Heart left ventricle (tissue), 16 donors: ENCODE measurements at regions of chr14 and their contacts with region 1.

Region 1: DNA sequence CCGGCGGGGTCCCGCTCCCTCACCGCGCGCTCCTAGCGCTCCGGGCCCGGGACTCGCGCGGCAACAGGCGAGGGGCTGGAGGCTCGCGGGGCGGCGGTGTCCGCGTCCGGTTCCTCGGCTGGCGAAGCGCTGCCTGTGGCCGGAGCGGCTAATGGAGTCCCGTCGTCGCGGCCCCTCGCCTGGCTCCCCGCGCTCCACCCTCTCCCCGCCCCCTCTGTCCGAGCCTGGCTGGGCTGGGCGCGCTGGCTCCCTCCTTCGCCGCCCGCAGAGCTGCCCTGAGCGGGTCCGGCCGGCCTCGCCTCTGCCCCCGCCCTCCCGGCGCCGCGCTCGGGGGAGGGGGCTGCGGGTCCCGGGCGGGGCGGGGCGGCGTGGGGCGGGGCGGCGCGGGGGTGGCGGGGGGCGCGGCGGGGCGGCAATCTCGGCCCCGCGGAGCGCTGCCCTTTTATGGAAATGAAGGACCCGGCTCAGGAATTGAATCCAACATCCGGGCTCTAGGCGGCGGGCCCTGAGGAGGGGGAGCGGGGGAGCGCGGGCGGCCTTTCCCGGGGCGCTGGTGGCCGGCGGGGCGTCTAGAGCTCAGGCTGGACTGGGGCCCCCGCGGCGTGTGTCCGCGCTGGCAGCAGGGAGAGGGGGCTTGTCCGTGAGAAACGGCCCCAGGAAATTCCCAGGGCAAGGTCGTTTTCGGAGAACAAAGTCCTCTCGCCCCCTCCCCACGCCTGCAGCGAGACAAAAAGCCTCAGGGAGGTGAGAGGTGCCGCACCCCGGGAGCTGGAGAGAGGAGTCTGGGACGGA is at the start of gene FERMT2:
- DNase-seq: peak; percentile 92 to 94 (median 93)
- ATAC-seq: peak; percentile 89 to 97 (median 92)
- H3K4me3 ChIP-seq: peak within 1 kb of the TSS; percentile 65 to 98 (median 94)
- H3K27ac ChIP-seq: peak within 1 kb of the TSS; percentile 96 to 100 (median 99)
- H3K4me1 ChIP-seq: peaks cover 11 to 43% (median 33%) of the 10 kb centered on the region in 12 donors
- H3K27me3 ChIP-seq: peaks cover 0 to 44% (median 0%) of the 10 kb centered on the region in 9 donors
- CTCF ChIP-seq: no peak
- POLR2A ChIP-seq: peak; percentile 5 to 79
- total RNA-seq, gene FERMT2: 87.4 to 158 (median 104) TPM

Region 2: DNA sequence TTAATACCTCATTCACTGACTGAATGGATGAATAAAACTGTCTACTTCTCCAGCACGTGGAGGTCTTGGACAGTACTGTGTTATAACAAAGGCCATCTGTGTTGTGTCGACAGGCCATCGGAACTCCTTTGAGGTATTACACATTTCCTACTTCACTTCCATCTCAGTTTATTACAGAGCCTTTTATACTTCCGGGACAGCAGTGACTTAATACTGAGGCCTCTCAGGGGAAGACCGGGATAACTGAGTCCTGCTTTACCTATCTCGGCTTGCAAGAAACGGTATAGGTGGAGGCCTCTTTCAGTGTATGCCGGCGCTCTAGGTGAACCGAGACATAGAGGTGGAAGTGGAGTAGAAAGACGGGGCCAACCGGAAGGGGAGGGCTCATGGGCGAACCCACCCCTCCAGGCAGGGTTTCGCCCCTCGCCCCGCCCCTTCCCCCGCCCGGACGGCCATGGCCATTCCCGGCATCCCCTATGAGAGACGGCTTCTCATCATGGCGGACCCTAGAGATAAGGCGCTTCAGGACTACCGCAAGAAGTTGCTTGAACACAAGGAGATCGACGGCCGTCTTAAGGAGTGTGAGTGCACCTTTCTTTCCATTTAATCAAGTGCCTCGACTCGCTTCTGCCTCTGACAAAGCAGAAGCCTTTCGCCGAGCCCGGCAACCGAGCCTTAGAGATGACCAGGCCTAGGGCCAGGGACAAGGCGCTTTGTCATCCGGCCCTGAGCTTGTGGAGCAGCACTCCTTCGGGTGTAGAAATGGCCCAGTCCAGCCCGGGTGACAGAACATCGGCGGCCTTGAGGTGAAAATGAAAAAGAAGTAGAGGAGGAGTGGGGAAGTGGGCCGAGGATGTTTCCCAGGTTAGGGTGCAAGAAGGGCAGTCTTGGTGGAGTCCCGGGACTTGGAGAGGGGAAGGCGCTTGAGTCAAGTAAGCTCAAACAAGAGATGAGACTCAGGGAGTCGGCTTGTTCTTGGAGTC is 244.1 kb before region 1 on chr14 and contains the start of gene PSMC6:
- intact Hi-C with region 1: loop called in 1 of 10 experiments (anchors 10 kb)
- DNase-seq: peak; percentile 96 to 97 (median 96)
- ATAC-seq: peak; percentile 99 to 100 (median 100)
- H3K4me3 ChIP-seq: peak within 1 kb of the TSS; percentile 61 to 91 (median 80)
- H3K27ac ChIP-seq: peak within 1 kb of the TSS; percentile 68 to 93 (median 90)
- H3K4me1 ChIP-seq: peaks cover 0 to 43% (median 20%) of the 10 kb centered on the region in 12 donors
- H3K27me3 ChIP-seq: no peaks in the 10 kb centered on the region
- CTCF ChIP-seq: no peak
- POLR2A ChIP-seq: peak in 1 of 2 donors; percentile 58
- total RNA-seq, gene PSMC6: 74.3 to 90.7 (median 81.4) TPM

Region 3: DNA sequence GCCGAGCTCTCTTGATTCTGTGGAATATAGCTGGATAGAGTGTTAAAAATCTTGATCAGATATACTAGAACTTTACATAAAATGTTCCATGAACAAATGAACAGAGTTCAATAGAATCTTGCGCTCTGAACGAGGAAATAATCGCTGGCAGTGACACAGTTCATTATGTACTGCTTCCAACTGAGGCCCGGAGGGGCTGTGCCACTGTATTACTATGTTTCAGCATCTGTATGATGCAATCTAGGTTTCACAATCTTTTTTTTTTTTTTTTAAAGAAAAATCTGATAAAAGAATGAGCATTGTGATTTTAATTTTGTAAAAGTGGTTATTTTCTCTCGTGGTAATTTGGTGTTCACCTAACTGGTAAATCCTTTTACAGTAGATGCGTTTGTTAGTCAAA is 77.4 kb before region 1 on chr14:
- intact Hi-C with region 1: loop called in 2 of 10 experiments (anchors 2 to 10 kb)
- DNase-seq: no peak
- ATAC-seq: peak in 2 of 4 donors; percentile 44 to 47
- H3K4me3 ChIP-seq: no peak overlapping the region
- H3K27ac ChIP-seq: no peak overlapping the region
- H3K4me1 ChIP-seq: peaks cover 0 to 32% (median 17%) of the 10 kb centered on the region in 12 donors
- H3K27me3 ChIP-seq: no peaks in the 10 kb centered on the region
- CTCF ChIP-seq: no peak
- POLR2A ChIP-seq: no peak

Region 4: DNA sequence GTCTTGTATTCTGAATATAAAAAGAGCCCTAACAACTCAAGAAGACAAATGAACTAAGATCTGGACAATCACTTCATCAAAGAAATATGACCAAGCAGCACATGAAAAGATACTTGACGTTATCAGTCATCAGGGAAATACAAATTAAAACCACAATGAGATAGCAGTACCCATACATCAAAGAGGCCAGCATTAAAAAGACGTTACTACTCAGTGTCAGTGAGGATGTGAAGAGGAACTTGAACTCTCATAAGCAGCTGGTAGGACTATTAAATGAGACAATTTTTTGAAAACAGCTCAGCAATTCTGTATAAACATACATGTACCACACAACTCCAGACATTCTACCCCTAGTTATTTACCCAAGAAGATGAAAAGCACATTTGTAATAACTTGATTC is 56.1 kb before region 1 on chr14:
- intact Hi-C with region 1: loop called in 1 of 10 experiments (anchors 10 kb)
- DNase-seq: no peak
- ATAC-seq: peak in 2 of 4 donors; percentile 42 to 47
- H3K4me3 ChIP-seq: no peak overlapping the region
- H3K27ac ChIP-seq: no peak overlapping the region
- H3K4me1 ChIP-seq: peaks cover 0 to 22% (median 12%) of the 10 kb centered on the region in 12 donors
- H3K27me3 ChIP-seq: no peaks in the 10 kb centered on the region
- CTCF ChIP-seq: no peak
- POLR2A ChIP-seq: no peak

Region 5: DNA sequence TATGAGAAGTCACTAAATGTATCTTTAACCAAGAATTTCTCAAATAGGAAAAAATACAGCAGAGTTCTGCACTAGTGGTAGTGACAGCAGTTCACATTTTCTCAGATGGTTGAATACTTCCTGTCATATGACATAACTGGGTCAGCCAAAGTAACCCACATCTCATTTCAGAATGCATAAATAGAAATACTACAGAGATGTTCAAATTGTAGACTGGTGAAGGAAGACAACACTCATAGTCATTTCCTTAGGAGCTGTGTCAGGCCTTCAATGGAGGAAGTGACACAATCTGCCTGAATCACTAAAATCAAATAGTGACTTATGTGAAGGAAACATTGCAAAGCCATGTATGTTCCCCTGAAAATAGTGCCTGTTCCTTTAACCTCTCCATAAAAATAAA is 32.6 kb before region 1 on chr14:
- intact Hi-C with region 1: loop called in 2 of 10 experiments (anchors 5 kb)
- DNase-seq: no peak
- ATAC-seq: peak; percentile 60 to 88 (median 82)
- H3K4me3 ChIP-seq: no peak overlapping the region
- H3K27ac ChIP-seq: peak overlapping the region in 7 of 12 donors; percentile 2 to 75 (median 16)
- H3K4me1 ChIP-seq: peaks cover 11 to 70% (median 51%) of the 10 kb centered on the region in 12 donors
- H3K27me3 ChIP-seq: no peaks in the 10 kb centered on the region
- CTCF ChIP-seq: no peak
- POLR2A ChIP-seq: no peak